ENCODE measurements at regions of chr4 and their contacts with region 1.

Region 1: DNA sequence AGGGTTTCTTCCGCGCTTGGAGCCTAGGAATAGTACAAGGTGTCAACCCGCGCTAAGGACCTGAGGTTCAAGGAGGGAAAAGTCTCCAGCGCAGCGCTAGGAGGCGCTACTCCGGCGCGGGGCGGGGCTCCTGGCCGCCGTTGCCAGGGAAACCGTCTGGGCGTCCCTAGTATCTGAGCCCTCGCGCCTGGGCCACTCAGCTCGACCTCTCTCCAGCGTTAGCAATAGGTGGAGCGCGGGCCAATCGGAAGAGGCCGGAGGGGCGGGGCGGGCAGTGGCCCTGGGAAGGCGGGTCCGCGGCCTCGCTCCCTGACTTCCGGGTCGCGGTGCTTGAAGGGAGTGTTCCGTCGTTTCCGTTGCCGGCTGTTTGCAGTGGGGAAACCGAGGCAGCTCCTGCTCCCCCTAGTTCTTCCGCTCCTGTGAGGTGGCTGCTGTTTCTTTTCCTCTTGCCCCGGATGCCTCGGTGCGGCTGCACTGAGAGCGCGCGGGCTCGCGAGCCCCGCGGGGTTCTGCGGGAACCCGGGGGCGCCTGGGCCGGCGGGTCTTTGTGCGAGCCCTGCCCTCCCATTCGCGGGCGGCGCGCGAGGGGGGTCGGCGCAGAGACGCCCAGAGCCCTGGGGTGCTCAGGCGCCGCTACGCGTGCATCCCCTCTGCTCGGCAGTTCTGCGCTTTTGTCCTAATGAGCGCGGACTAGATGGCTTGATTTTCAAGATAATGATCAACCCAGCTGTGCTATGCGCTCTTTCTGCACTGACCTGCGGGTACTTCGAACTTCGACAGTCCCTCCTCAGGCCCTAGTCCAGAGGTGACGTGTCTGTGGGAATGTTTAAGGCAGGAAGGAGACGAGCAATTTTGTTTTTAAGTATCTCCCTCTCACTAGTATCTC is at the start of gene ELMOD2:
- DNase-seq: peak; percentile 97 to 100 (median 99)

Region 2: GRCh38 chr4:140373328-140374129 is 150.6 kb before region 1 on chr4 and contains the start of gene SCOC:
- intact Hi-C with region 1: loop called (anchors 2 kb)
- DNase-seq: peak; percentile 98 to 100 (median 99)

Region 3: DNA sequence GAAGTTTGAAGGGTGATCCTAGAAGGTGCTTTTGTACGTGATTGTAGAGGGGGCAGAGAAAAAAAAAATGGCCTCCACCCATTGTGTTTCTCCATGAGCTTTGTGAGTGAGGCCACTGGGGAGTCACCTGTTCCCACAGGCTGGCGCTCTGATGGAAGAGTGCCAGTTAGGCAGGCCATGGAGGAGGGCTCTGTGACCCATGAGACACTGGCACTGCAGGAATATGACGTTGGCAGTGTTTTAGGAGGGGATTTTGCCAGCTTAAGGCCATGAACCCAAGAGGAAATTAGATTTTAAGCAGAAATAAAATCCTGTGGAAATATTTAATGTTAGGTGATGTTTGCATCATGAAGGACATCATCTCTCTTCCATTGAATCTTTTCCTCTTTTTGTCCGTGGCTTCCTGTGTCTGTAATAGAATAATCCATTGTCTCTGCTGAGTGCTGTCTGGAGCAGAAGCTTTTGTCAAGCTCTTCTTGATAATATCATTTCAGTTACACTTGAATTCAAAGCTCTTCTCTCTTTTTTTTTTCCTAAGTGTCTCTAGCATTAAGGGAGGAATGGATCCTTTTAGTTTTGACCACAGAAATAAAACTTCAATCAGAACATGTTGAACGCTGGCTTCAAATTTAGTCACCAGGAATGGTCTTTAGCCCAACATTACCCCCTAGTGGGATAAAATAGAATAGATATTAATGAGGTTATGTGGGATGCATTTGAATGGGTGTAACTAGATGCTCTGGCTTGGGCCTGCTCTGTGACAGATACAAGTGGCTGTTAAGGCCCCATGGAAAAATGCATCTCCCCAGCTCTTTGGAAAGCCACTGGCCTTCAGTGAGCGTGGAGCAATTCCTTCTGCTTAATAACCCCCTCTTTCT is 85.7 kb after region 1 on chr4:
- intact Hi-C with region 1: loop called (anchors 5 kb)
- DNase-seq: peak in 1 of 10 donors; percentile 14

Region 4: DNA sequence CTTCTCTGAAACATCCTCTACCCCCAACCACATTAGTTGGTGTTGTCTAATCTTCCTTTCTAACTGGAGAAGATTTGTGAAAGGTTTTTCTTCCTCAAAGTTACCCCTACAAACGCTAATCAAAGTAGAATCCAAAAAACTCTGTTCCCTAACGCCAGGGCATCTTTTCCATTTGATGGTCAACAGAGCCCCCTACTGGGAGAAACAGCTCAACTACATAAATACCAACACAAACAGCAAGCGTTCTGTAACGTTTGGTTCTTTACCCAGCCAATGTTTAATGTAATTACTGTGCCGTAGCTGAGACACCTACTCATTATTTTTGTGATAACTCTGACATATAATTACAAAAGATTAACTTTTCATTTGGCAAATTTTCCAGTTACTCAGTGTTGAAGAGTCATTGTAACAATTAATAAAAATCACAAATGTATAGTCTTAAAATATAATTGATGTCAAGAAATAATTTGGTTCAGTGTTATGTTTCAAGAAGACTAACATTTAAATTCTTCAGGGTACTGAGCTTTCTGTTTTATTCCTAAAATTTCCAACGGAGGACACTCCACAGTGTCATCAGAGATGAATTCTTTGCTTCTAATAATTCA is 327.0 kb after region 1 on chr4:
- intact Hi-C with region 1: loop called (anchors 2 kb)
- DNase-seq: peak in 3 of 10 donors; percentile 19 to 37 (median 35)